Activated T-helper 1 cell treated with anti-CD3 and anti-CD28 coated beads, Interleukin-12 subunit alpha, Interleukin-12 subunit beta, Interleukin-2, Interleukin-4 antibody, amounts not matched to agents 30 ng/mL and 10 ng/mL and 1 ng/mL, durations not matched to agents 14 hours and 24 hours and 36 hours (primary cell): ENCODE measurements at regions of chr19 and their contacts with region 1.

Region 1: GRCh38 chr19:55258828-55259539 is at the start of gene PPP6R1:
- DNase-seq: peak; percentile 93
- H3K4me3 Mint-ChIP-seq: peak within 1 kb of the TSS; percentile 96
- H3K27ac Mint-ChIP-seq: peak within 1 kb of the TSS; percentile 98
- H3K4me1 Mint-ChIP-seq: peaks cover 46% of the 10 kb centered on the region
- H3K27me3 Mint-ChIP-seq: no peaks in the 10 kb centered on the region
- total RNA-seq, gene PPP6R1: 200 and 202 TPM in 2 replicates

Region 2: DNA sequence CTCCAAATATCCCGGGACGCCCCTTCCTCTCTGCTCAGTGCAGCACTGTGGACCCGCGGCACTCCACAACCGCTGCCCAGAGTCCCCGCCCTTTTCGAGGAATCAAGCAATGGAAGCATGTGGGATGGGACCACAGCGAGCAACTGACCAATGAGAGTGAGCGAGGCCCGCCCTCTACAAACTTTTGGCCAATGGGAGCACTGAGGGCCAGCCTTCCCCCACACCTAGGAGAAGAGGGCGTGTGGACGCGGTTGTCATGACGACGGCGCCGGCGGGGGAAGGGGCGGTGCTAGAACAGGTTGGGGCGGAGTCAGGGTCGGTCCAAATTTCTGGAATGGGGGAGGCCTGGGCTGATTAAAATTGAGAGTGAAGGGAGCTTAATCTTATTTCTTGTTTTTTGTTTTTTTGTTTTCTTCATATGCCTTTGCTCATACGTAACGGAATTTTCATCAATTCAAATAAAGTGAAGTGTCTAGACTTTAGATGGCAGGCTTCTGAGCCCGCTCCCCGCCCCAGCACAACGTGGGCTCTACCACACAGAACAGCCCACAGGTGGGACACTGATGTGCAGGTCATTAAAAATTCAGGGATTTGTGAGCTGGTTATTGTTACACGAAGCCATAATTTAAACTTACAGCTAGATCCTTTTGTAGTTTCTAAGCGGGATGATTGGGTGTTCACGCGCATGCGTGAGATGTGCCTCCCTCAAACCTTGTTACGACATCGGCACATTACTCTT is 92.3 kb before region 1 on chr19 and contains the start of gene DNAAF3:
- intact Hi-C with region 1: loop called (anchors 2 kb)
- DNase-seq: peak; percentile 76
- H3K4me3 Mint-ChIP-seq: peak within 1 kb of the TSS; percentile 84
- H3K27ac Mint-ChIP-seq: peak within 1 kb of the TSS; percentile 32
- H3K4me1 Mint-ChIP-seq: peaks cover 12% of the 10 kb centered on the region
- H3K27me3 Mint-ChIP-seq: peaks cover 57% of the 10 kb centered on the region
- total RNA-seq, gene DNAAF3: 0.36 TPM in 1 of 2 replicates, not detected in the other

Region 3: GRCh38 chr19:55273978-55274707 is 15.2 kb after region 1 on chr19:
- intact Hi-C with region 1: no loop called
- DNase-seq: no peak
- H3K4me3 Mint-ChIP-seq: no peak overlapping the region
- H3K27ac Mint-ChIP-seq: no peak overlapping the region
- H3K4me1 Mint-ChIP-seq: peaks cover 19% of the 10 kb centered on the region
- H3K27me3 Mint-ChIP-seq: no peaks in the 10 kb centered on the region

Region 4: DNA sequence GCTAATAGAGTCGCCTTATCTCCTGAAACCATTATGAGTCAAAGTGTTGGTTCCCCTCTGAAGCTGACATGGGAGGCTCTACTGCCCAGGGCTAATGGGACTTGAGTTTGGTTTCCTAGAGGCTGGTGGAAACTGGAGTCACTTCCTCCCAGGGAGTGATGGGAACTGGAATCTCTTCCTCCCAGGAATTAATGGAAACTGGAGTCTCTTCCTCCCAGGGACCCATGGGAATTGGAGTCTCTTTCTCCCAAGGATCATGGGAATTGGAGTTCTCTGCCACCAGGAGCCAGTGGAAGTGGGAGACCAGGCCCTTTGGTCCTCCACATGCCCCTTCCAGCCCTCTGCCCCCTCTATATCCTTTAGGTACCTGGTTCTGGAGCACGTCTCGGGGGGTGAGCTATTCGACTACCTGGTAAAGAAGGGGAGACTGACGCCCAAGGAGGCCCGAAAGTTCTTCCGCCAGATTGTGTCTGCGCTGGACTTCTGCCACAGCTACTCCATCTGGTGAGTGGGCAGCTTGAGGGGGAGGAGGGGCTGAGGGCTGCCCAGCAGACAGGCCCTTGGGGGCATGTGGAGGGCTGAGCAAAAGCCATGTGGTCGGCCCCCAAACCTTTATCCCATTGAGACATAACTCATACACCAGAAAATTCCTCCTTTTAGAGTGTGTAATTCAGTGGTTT is 30.3 kb after region 1 on chr19:
- intact Hi-C with region 1: loop called (anchors 5 kb)
- DNase-seq: no peak
- H3K4me3 Mint-ChIP-seq: no peak overlapping the region
- H3K27ac Mint-ChIP-seq: no peak overlapping the region
- H3K4me1 Mint-ChIP-seq: peaks cover 5% of the 10 kb centered on the region
- H3K27me3 Mint-ChIP-seq: peaks cover 3% of the 10 kb centered on the region

Region 5: DNA sequence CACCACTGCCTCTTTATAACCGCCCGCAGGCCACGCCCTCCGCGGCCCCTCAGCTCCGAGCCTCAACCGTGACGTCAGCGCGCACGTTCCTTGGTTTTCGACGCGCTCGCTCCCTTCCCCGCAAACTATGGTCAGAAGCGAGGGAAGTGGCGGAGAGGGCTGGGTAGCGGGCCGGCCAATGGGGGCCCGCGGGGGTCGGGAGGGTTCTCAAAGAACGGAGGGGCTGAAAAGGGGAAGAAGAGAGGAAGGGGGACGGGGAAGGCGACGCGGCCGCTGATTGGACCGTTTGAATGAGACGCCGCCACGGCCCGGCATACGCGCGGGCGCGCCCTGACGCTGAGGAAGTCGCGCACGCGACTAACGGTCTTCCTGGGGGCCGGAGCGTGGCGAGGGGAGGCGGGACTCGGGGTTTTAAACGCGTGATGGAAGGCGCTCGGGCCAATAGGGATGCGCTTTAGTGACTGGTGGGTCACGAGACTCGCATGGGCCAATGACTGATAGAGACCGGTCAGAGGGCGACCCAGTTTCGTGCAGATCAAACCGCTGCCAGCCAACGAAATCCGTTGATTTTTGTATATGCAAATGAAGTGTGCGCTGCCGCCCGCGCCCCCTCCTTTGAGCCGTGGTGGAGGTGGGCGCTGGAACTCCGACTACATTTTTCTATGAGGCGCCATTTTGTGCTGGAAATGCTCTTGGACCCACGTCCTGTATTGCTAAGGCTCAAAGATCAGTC is 149.0 kb after region 1 on chr19:
- intact Hi-C with region 1: loop called (anchors 1 kb)
- DNase-seq: peak; percentile 96
- H3K4me3 Mint-ChIP-seq: peak overlapping the region; percentile 93
- H3K27ac Mint-ChIP-seq: peak overlapping the region; percentile 97
- H3K4me1 Mint-ChIP-seq: peaks cover 26% of the 10 kb centered on the region
- H3K27me3 Mint-ChIP-seq: peaks cover 6% of the 10 kb centered on the region

Region 6: DNA sequence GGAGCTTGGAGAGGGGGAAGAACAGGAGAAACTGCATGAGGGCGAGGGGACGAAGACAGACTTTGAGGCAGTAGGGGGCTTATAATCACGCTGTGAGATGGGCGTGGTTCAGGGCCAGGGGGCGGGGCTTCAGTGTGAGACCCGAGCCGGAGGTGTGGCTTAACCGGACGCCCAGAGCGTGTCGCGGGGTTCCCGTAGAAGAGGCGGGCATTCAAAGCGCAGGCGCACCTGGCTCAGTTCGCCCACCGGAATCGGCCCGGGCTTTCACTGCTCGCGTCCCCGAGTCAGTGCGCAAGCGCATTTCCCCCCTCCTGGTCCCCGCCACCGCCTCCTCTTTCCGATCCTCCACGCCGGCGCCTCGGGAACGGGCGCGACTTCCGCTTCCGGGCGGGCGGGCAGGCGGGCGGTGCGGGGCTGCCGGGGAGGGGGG is 346.2 kb after region 1 on chr19:
- intact Hi-C with region 1: loop called (anchors 1 kb)
- DNase-seq: peak; percentile 98
- H3K4me3 Mint-ChIP-seq: peak overlapping the region; percentile 86
- H3K27ac Mint-ChIP-seq: peak overlapping the region; percentile 95
- H3K4me1 Mint-ChIP-seq: peaks cover 45% of the 10 kb centered on the region
- H3K27me3 Mint-ChIP-seq: no peaks in the 10 kb centered on the region